ENCODE measurements at regions of chrX and their contacts with region 1.

Region 1: DNA sequence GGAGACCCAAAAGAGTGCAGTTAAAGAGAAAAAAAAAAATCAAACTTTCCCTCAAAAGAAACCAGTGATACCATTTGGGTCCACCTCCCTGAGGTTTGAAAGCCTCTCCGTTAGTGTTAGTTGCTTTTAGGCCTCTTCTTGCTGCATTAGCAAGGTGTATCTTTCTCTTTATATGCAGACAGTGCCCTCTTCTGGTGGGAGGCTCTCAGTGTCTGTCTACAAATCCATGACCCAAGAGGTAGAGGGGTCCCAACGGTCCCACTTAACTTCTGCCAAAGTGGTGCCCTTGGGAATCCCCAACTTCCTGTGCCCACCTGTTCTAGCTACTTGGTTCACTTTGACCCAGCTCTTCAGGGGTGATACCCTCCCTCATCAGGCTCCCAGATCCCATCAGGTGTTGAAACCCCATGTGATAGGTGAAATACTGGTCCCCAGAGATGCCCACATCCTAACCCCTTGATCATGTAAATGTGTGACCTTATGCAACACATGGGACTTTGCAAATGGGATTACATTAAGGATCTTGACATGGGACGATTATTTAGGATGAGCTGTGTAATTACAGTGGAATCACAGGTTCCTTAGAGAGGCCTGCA is 63.7 kb upstream of the CD99 start:
- DNase-seq: peak; percentile 69
- ATAC-seq: peak; percentile 28
- H3K4me3 ChIP-seq: no peak overlapping the region
- H3K4me3 Mint-ChIP-seq: peak overlapping the region; percentile 17
- H3K27ac ChIP-seq: no peak overlapping the region
- H3K27ac Mint-ChIP-seq: peak overlapping the region; percentile 54
- H3K4me1 ChIP-seq: peaks cover 17 to 27% of the 10 kb centered on the region in 2 donors
- H3K4me1 Mint-ChIP-seq: peaks cover 43% of the 10 kb centered on the region
- H3K27me3 ChIP-seq: no peaks in the 10 kb centered on the region
- H3K27me3 Mint-ChIP-seq: no peaks in the 10 kb centered on the region
- CTCF ChIP-seq: peak; percentile 66

Region 2: GRCh38 chrX:1246816-1247215 is 1380.6 kb before region 1 on chrX:
- CTCF ChIA-PET with region 1: no interaction called
- POLR2A ChIA-PET with region 1: no interaction called
- intact Hi-C with region 1: loop called (anchors 10 kb)
- DNase-seq: peak; percentile 84
- ATAC-seq: peak; percentile 64
- H3K4me3 ChIP-seq: no peak overlapping the region
- H3K4me3 Mint-ChIP-seq: no peak overlapping the region
- H3K27ac ChIP-seq: no peak overlapping the region
- H3K27ac Mint-ChIP-seq: peak overlapping the region; percentile 61
- H3K4me1 ChIP-seq: peaks cover 12 to 20% of the 10 kb centered on the region in 2 donors
- H3K4me1 Mint-ChIP-seq: peaks cover 17% of the 10 kb centered on the region
- H3K27me3 ChIP-seq: no peaks in the 10 kb centered on the region
- H3K27me3 Mint-ChIP-seq: no peaks in the 10 kb centered on the region
- CTCF ChIP-seq: peak; percentile 90

Region 3: GRCh38 chrX:1649621-1650020 is 977.7 kb before region 1 on chrX:
- CTCF ChIA-PET with region 1: no interaction called
- POLR2A ChIA-PET with region 1: no interaction called
- intact Hi-C with region 1: loop called (anchors 1 kb)
- DNase-seq: no peak
- ATAC-seq: no peak
- H3K4me3 ChIP-seq: no peak overlapping the region
- H3K4me3 Mint-ChIP-seq: no peak overlapping the region
- H3K27ac ChIP-seq: no peak overlapping the region
- H3K27ac Mint-ChIP-seq: no peak overlapping the region
- H3K4me1 ChIP-seq: peaks cover 0 to 7% of the 10 kb centered on the region in 2 donors
- H3K4me1 Mint-ChIP-seq: peaks cover 10% of the 10 kb centered on the region
- H3K27me3 ChIP-seq: peaks cover 0 to 13% (median 2%) of the 10 kb centered on the region in 4 experiments
- H3K27me3 Mint-ChIP-seq: peaks cover 8% of the 10 kb centered on the region
- CTCF ChIP-seq: no peak

Region 4: DNA sequence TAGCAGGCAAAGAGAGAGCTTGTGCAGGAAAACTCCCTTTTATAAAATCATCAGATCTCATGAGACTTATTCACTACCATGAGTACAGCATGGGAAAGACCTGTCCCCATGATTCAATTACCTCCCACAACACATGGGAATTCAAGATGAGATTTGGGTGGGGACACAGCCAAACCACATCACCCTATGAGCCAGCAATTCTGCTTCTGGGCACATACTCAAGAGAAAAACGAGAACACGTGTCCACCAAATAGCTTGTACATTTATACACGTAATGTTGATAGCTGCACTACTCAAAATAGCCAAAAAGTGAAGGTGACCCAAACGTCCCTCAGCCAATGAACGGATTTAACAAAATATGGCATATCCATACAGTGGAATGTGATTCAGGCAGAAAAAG is 32.1 kb before region 1 on chrX:
- CTCF ChIA-PET with region 1: no interaction called
- POLR2A ChIA-PET with region 1: no interaction called
- intact Hi-C with region 1: no loop called
- DNase-seq: no peak
- ATAC-seq: no peak
- H3K4me3 ChIP-seq: no peak overlapping the region
- H3K4me3 Mint-ChIP-seq: no peak overlapping the region
- H3K27ac ChIP-seq: no peak overlapping the region
- H3K27ac Mint-ChIP-seq: no peak overlapping the region
- H3K4me1 ChIP-seq: no peaks in the 10 kb centered on the region
- H3K4me1 Mint-ChIP-seq: peaks cover 8% of the 10 kb centered on the region
- H3K27me3 ChIP-seq: no peaks in the 10 kb centered on the region
- H3K27me3 Mint-ChIP-seq: no peaks in the 10 kb centered on the region
- CTCF ChIP-seq: no peak

Region 5: DNA sequence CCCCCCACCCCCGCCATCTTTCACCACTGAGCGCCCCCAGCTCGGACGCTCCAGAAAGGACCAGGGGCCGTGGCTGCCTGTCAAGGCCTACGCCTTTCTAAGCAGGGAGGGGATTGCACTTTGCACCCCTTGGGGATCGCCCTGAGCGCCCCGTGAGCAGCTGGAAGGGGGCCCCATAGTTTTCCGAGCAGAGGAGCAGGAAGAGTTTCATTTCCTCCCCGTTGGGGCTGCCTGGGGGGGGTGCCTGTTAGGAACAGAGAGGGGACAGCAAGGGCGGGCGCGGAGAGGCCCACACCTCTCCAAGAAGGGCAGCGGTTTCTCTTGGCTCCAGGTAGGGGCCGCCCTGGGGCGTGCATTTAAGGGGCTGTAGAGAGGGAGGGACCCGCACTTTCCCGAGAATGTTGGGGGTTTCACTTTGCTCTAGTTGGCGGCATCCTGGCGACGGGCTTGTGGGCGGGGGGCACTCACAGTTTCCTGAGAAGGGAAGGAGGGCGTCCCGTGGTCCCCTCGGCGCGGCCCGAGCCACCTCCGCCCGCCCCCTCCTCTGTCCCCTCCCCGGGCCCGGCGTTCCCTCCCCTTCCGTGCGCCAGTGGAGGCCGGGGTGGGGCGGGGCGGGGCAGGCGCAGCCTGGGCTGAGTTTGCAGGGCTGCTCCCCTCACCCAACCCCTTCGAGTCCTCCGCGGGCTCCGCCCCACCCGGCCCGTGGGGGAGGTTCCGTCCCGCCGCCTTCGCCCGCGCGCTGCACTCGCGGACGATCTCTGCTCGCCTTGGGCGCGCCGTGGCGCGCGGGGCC is 18.5 kb before region 1 on chrX:
- CTCF ChIA-PET with region 1: no interaction called
- POLR2A ChIA-PET with region 1: no interaction called
- intact Hi-C with region 1: loop called (anchors 1 kb)
- DNase-seq: peak; percentile 90
- ATAC-seq: peak; percentile 97
- H3K4me3 ChIP-seq: peak overlapping the region; percentile 36 to 89 (median 83)
- H3K4me3 Mint-ChIP-seq: peak overlapping the region; percentile 94
- H3K27ac ChIP-seq: peak overlapping the region; percentile 43 to 58
- H3K27ac Mint-ChIP-seq: peak overlapping the region; percentile 89
- H3K4me1 ChIP-seq: peaks cover 16 to 25% of the 10 kb centered on the region in 2 donors
- H3K4me1 Mint-ChIP-seq: peaks cover 32% of the 10 kb centered on the region
- H3K27me3 ChIP-seq: no peaks in the 10 kb centered on the region
- H3K27me3 Mint-ChIP-seq: no peaks in the 10 kb centered on the region
- CTCF ChIP-seq: no peak

Region 6: GRCh38 chrX:2638279-2638678 is 10.9 kb after region 1 on chrX:
- CTCF ChIA-PET with region 1: no interaction called
- POLR2A ChIA-PET with region 1: no interaction called
- intact Hi-C with region 1: no loop called
- DNase-seq: no peak
- ATAC-seq: no peak
- H3K4me3 ChIP-seq: no peak overlapping the region
- H3K4me3 Mint-ChIP-seq: no peak overlapping the region
- H3K27ac ChIP-seq: no peak overlapping the region
- H3K27ac Mint-ChIP-seq: no peak overlapping the region
- H3K4me1 ChIP-seq: no peaks in the 10 kb centered on the region
- H3K4me1 Mint-ChIP-seq: no peaks in the 10 kb centered on the region
- H3K27me3 ChIP-seq: no peaks in the 10 kb centered on the region
- H3K27me3 Mint-ChIP-seq: no peaks in the 10 kb centered on the region
- CTCF ChIP-seq: no peak

Region 7: DNA sequence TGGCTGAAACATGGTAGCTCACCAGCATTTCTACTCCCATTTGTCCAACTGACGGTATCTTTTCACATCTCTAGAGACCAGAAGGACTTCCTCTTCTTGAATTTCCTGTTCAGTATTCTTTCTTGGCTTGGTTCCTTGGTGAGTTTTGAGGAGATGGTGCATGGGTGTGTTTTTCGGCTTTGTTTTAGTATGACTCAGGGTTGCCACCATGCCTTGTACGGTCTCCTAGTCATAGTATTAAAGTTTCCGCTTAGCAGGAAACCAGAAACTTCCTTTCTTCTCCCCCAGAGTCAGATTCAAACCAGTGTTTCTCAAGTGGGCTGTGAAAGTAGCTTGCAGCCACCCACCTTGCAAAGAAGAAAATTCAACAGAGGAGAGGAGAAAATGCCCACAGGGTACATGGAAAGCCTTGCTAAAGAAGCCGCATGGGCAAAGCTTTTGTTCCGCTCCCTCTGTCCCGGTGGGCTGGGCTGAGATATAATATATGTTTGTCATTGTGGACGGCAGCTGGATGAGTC is 69.4 kb after region 1 on chrX:
- CTCF ChIA-PET with region 1: no interaction called
- POLR2A ChIA-PET with region 1: no interaction called
- intact Hi-C with region 1: loop called (anchors 1 kb)
- DNase-seq: peak; percentile 71
- ATAC-seq: peak; percentile 78
- H3K4me3 ChIP-seq: peak overlapping the region in 3 of 5 experiments; percentile 6 to 38 (median 15)
- H3K4me3 Mint-ChIP-seq: peak overlapping the region; percentile 60
- H3K27ac ChIP-seq: peak overlapping the region; percentile 48 to 62
- H3K27ac Mint-ChIP-seq: peak overlapping the region; percentile 83
- H3K4me1 ChIP-seq: peaks cover 64 to 83% of the 10 kb centered on the region in 2 donors
- H3K4me1 Mint-ChIP-seq: peaks cover 90% of the 10 kb centered on the region
- H3K27me3 ChIP-seq: no peaks in the 10 kb centered on the region
- H3K27me3 Mint-ChIP-seq: no peaks in the 10 kb centered on the region
- CTCF ChIP-seq: no peak

Measured in B cell (primary cell).